Transverse colon (tissue), 4 donors: ENCODE measurements at regions of chr7 and their contacts with region 1.

Region 1: DNA sequence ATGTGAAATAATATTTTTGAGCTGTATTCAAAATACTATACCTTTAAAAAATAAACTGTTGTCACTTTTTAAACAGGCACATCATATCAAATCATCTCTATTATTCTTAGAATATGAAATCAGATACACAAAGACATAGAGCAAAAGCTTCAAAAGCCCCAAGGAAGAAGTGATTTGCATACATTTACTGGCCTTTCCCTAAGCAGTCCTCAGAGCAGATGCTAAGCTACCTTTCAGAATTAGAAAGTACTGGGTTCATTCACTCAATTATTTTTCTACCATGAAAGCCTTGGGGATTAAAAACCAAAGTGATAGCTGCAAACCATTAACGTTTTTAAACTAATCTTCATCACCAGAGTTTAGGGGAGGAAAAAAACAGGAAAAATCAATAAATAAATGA is 55.8 kb upstream of the RNF148 start:
- DNase-seq: no peak
- H3K4me3 ChIP-seq: no peak overlapping the region
- H3K27ac ChIP-seq: no peak overlapping the region
- H3K4me1 ChIP-seq: no peaks in the 10 kb centered on the region
- H3K27me3 ChIP-seq: no peaks in the 10 kb centered on the region
- CTCF ChIP-seq: no peak
- EP300 ChIP-seq: no peak
- POLR2A ChIP-seq: no peak

Region 2: GRCh38 chr7:122457965-122458364 is 300.5 kb before region 1 on chr7:
- in situ Hi-C with region 1: no loop called
- intact Hi-C with region 1: no loop called
- DNase-seq: no peak
- H3K4me3 ChIP-seq: no peak overlapping the region
- H3K27ac ChIP-seq: no peak overlapping the region
- H3K4me1 ChIP-seq: no peaks in the 10 kb centered on the region
- H3K27me3 ChIP-seq: no peaks in the 10 kb centered on the region
- CTCF ChIP-seq: no peak
- EP300 ChIP-seq: no peak
- POLR2A ChIP-seq: no peak

Region 3: GRCh38 chr7:123355576-123356195 is 597.2 kb after region 1 on chr7:
- in situ Hi-C with region 1: no loop called
- intact Hi-C with region 1: loop called (anchors 5 kb)
- DNase-seq: no peak
- H3K4me3 ChIP-seq: no peak overlapping the region
- H3K27ac ChIP-seq: no peak overlapping the region
- H3K4me1 ChIP-seq: no peaks in the 10 kb centered on the region
- H3K27me3 ChIP-seq: no peaks in the 10 kb centered on the region
- CTCF ChIP-seq: no peak
- EP300 ChIP-seq: no peak
- POLR2A ChIP-seq: no peak